ENCODE measurements at regions of chr10 and their contacts with region 1.

Region 1: GRCh38 chr10:23314835-23315239 is 29.8 kb downstream of the C10orf67 start:
- DNase-seq: peak; percentile 68
- H3K4me3 ChIP-seq: no peak overlapping the region
- H3K27ac ChIP-seq: no peak overlapping the region
- H3K4me1 ChIP-seq: no peaks in the 10 kb centered on the region
- H3K27me3 ChIP-seq: no peaks in the 10 kb centered on the region
- CTCF ChIP-seq: peak; percentile 62 to 70

Region 2: GRCh38 chr10:23438550-23439441 is 124.0 kb after region 1 on chr10 and contains the start of gene OTUD1:
- CTCF ChIA-PET with region 1: interaction called, 5 read pairs
- dilution Hi-C with region 1: no loop called
- in situ Hi-C with region 1: no loop called
- intact Hi-C with region 1: loop called (anchors 2 kb)
- DNase-seq: peak; percentile 89
- H3K4me3 ChIP-seq: peak within 1 kb of the TSS; percentile 72 to 81 (median 77)
- H3K27ac ChIP-seq: peak within 1 kb of the TSS; percentile 61
- H3K4me1 ChIP-seq: peaks cover 14% of the 10 kb centered on the region
- H3K27me3 ChIP-seq: no peaks in the 10 kb centered on the region
- CTCF ChIP-seq: peak in 1 of 2 donors; percentile 22
- total RNA-seq, gene OTUD1: 9.6 to 12.0 TPM

Region 3: DNA sequence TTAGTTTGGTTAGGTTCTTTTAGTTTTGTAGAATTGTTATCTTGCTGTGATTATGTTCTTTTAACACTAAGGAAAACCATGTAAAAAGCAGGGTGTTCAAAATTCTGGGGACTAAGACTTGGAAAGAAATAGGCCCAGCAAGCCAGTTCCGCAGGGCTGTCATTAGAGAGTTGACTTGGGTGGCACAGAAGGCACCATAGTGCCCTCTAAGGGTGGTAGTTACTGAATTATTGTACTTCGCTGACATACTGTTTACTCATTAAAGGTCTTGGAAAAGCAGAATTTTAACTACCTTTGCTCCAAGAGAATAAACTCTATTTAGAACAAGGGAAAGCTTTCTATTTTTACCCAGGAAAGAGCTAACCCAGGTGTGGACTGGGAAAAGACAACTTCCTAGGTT is 210.6 kb after region 1 on chr10:
- CTCF ChIA-PET with region 1: interaction called, 11 read pairs
- dilution Hi-C with region 1: loop called (anchors 5 kb)
- in situ Hi-C with region 1: loop called (anchors 5 kb)
- intact Hi-C with region 1: loop called (anchors 1 kb)
- DNase-seq: peak; percentile 14
- H3K4me3 ChIP-seq: no peak overlapping the region
- H3K27ac ChIP-seq: no peak overlapping the region
- H3K4me1 ChIP-seq: no peaks in the 10 kb centered on the region
- H3K27me3 ChIP-seq: peaks cover 1% of the 10 kb centered on the region
- CTCF ChIP-seq: peak; percentile 34 to 66

Region 4: DNA sequence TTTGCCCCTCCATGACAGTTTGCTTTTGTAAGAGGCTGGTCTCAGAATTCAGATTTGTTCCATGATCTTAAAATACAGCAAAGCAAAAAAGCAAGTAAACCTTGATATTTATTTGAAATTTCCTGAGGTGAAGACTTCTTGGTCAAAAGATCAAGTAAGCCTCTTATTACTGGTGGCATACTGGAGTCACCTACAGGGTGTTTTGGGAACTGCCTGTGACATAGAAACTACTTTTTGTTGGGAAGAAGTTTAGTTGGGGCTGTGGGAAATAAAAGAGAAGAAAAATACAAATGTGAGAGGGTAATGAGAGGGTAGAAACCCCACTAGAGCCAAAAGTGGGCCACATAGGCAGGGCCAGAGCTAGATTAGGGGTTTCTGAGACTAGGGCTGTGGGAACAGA is 341.9 kb after region 1 on chr10:
- CTCF ChIA-PET with region 1: no interaction called
- dilution Hi-C with region 1: no loop called
- in situ Hi-C with region 1: no loop called
- intact Hi-C with region 1: loop called (anchors 1 kb)
- DNase-seq: peak; percentile 11
- H3K4me3 ChIP-seq: no peak overlapping the region
- H3K27ac ChIP-seq: no peak overlapping the region
- H3K4me1 ChIP-seq: no peaks in the 10 kb centered on the region
- H3K27me3 ChIP-seq: no peaks in the 10 kb centered on the region
- CTCF ChIP-seq: peak; percentile 59 to 70

Region 5: DNA sequence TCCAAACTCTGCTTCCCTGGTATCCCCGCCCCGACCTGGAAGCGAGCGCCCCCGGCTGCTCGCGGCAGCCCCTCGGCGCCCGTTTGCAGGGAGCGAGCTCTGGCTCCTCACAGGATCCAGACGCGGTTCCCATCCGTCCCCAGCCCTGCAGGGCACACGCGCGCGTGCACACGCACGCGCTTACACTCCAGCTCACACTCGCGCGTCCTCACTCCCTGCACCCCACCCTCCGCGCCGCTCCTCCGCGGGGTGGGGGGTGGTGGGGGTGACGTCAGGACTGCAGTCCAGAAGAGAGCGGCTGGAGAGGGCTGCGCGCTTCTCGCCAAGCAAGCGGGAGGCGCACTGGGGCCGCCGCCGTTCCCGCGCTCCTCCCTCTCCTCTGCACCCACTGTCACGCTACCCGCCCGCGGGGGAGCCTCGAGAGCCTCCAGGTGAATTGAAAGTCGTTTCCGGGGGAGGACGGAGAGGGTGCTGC is 379.6 kb after region 1 on chr10:
- CTCF ChIA-PET with region 1: no interaction called
- dilution Hi-C with region 1: loop called (anchors 25 kb)
- in situ Hi-C with region 1: loop called in 1 of 2 experiments (anchors 25 kb)
- intact Hi-C with region 1: no loop called
- DNase-seq: peak; percentile 23
- H3K4me3 ChIP-seq: no peak overlapping the region
- H3K27ac ChIP-seq: no peak overlapping the region
- H3K4me1 ChIP-seq: no peaks in the 10 kb centered on the region
- H3K27me3 ChIP-seq: peaks cover 30% of the 10 kb centered on the region
- CTCF ChIP-seq: no peak

Region 6: GRCh38 chr10:23702977-23703414 is 388.2 kb after region 1 on chr10:
- CTCF ChIA-PET with region 1: no interaction called
- dilution Hi-C with region 1: loop called (anchors 25 kb)
- in situ Hi-C with region 1: loop called in 1 of 2 experiments (anchors 25 kb)
- intact Hi-C with region 1: loop called (anchors 1 kb)
- DNase-seq: peak; percentile 47
- H3K4me3 ChIP-seq: no peak overlapping the region
- H3K27ac ChIP-seq: no peak overlapping the region
- H3K4me1 ChIP-seq: no peaks in the 10 kb centered on the region
- H3K27me3 ChIP-seq: no peaks in the 10 kb centered on the region
- CTCF ChIP-seq: peak; percentile 76 to 84

Measured in mammary epithelial cell (primary cell).